HepG2 (cell line): ENCODE measurements at regions of chr2 and their contacts with region 1.

Region 1: DNA sequence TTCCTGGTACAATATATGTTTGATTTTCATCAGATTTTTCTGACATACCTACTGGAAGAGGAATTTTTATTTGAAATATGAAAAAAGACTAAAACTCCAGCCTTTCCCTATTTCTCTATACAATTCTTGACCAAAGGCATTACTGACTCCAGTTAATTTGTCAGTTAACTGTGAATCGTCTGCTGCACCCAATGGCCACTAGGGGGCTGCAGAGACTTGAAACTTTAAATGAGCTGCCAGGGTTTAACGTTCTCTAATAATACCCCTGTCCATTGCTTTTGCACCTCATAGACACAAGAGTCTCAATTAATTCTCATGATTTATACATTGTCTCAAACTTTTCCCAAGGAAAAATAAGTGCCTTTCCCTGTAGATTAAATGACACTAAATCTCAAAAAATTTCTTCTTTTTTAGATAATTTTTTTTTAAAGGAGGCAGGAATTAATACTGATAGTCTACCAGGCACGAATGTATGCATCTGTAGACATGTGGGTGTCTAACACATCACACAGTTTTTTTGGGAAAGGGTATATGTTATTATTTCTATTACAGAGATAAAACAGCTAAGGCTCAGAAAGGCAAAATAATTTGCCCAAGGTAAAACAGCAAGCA is 1.8 kb upstream of the ALK start:
- DNase-seq: peak; percentile 68
- ATAC-seq: peak; percentile 73
- H3K4me3 ChIP-seq: no peak overlapping the region
- H3K27ac ChIP-seq: no peak overlapping the region
- H3K4me1 ChIP-seq: no peaks in the 10 kb centered on the region
- H3K27me3 ChIP-seq: peaks cover 0 to 12% of the 10 kb centered on the region in 2 experiments; a peak in 3 of 5 replicates
- CTCF ChIP-seq: peak; percentile 82
- EP300 ChIP-seq: no peak
- POLR2A ChIP-seq: no peak
- RAD21 ChIP-seq: 0 out of 2 replicates have a peak, but pooled peaks have one; percentile 28

Region 2: GRCh38 chr2:29309090-29310029 is 613.9 kb before region 1 on chr2:
- CTCF ChIA-PET with region 1: no interaction called
- POLR2A ChIA-PET with region 1: no interaction called
- in situ Hi-C with region 1: no loop called
- intact Hi-C with region 1: loop called (anchors 1 kb)
- DNase-seq: peak; percentile 62
- ATAC-seq: peak; percentile 94
- H3K4me3 ChIP-seq: no peak overlapping the region
- H3K27ac ChIP-seq: no peak overlapping the region
- H3K4me1 ChIP-seq: no peaks in the 10 kb centered on the region
- H3K27me3 ChIP-seq: peaks cover 0 to 24% of the 10 kb centered on the region in 2 experiments; a peak in 2 of 5 replicates
- CTCF ChIP-seq: peak; percentile 71
- EP300 ChIP-seq: no peak
- POLR2A ChIP-seq: no peak
- RAD21 ChIP-seq: no peak

Region 3: GRCh38 chr2:29936020-29936419 is 12.8 kb after region 1 on chr2:
- CTCF ChIA-PET with region 1: no interaction called
- POLR2A ChIA-PET with region 1: no interaction called
- in situ Hi-C with region 1: no loop called
- intact Hi-C with region 1: no loop called
- DNase-seq: no peak
- ATAC-seq: no peak
- H3K4me3 ChIP-seq: no peak overlapping the region
- H3K27ac ChIP-seq: no peak overlapping the region
- H3K4me1 ChIP-seq: no peaks in the 10 kb centered on the region
- H3K27me3 ChIP-seq: peaks cover 0 to 6% of the 10 kb centered on the region in 2 experiments; a peak in 1 of 5 replicates
- CTCF ChIP-seq: no peak
- EP300 ChIP-seq: no peak
- POLR2A ChIP-seq: no peak
- RAD21 ChIP-seq: no peak

Region 4: DNA sequence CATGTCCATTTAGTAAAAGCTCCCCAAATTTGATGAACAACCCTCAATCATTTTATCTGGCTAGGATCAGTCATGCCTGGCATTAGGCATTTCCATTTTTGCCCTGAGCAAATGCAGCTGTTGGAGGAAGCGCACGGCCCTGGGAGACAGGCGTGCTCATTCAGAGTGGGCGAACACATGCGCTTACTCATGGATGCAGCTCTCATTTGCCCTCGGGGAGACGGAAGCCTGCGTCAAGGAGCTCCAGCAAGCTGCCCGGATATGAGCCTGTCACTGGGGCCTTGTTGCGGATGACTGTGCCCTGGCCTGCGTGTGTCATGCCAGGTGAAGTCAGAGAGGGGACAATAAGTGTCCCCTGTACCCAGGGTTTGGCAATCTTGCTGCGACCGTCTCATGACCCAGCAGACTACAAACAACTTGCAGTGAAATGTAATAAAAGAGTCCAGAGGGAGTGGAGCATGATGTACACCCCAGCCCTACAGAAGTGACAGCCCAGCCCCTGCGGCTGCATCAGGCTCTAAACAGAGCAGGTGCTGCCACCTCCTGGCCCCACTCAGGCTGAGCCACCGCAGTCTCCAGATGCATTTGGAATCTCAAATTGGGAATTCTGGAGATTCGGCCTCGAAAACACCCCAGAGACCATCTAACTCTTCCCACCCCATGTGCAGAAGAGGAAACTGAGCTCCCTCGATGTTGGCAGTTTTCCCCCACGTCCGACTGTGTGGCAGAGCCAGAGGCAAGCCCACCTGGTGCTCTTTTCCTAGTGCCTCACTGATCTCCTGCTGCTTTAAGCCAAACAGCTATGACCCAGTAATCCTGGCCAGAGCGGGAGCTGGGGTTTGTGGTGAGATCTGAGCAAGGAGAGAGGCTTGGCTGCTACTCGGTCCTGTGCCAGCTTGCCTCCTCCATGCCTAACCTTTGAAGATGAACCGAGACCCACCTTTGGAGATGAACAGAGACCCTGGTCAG is 103.2 kb after region 1 on chr2:
- CTCF ChIA-PET with region 1: interaction called, 16 read pairs
- POLR2A ChIA-PET with region 1: no interaction called
- in situ Hi-C with region 1: loop called (anchors 5 kb)
- intact Hi-C with region 1: no loop called
- DNase-seq: peak; percentile 13
- ATAC-seq: peak; percentile 98
- H3K4me3 ChIP-seq: no peak overlapping the region
- H3K27ac ChIP-seq: no peak overlapping the region
- H3K4me1 ChIP-seq: no peaks in the 10 kb centered on the region
- H3K27me3 ChIP-seq: peaks cover 2 to 26% of the 10 kb centered on the region in 2 experiments; a peak in 3 of 5 replicates
- CTCF ChIP-seq: peak; percentile 83
- EP300 ChIP-seq: no peak
- POLR2A ChIP-seq: no peak
- RAD21 ChIP-seq: peak; percentile 70

Region 5: DNA sequence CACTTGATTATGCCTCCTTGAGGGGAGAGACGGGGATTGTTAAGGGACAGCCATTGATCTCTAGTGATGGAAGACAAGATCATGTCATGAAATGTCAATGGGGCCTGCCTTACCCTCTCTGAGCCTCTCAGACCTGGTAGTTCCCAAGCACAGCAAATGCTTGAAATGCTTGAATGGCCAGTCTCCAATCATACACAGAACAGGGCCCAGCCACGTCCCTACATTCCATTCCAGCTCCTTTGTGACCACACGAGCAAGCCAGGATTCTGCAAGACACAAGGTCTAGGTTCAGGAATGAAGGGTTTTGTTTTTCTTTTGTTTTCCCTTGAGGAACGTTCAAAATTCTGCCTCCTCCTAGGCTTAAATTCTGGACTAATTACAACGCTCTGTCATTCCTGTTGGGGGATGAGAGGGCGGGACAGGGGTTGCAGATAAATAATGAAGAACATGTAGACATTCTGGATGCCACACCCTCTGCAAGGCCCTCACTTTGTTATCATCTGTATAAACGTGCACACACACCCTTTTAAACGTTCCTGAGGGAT is 125.5 kb after region 1 on chr2:
- CTCF ChIA-PET with region 1: no interaction called
- POLR2A ChIA-PET with region 1: no interaction called
- in situ Hi-C with region 1: no loop called
- intact Hi-C with region 1: no loop called
- DNase-seq: no peak
- ATAC-seq: no peak
- H3K4me3 ChIP-seq: no peak overlapping the region
- H3K27ac ChIP-seq: no peak overlapping the region
- H3K4me1 ChIP-seq: no peaks in the 10 kb centered on the region
- H3K27me3 ChIP-seq: peaks cover 0 to 5% of the 10 kb centered on the region in 2 experiments; a peak in 1 of 5 replicates
- CTCF ChIP-seq: no peak
- EP300 ChIP-seq: no peak
- POLR2A ChIP-seq: no peak
- RAD21 ChIP-seq: no peak

Region 6: GRCh38 chr2:30072250-30072842 is 149.1 kb after region 1 on chr2:
- CTCF ChIA-PET with region 1: interaction called, 24 read pairs
- POLR2A ChIA-PET with region 1: no interaction called
- in situ Hi-C with region 1: loop called (anchors 5 kb)
- intact Hi-C with region 1: no loop called
- DNase-seq: peak; percentile 70
- ATAC-seq: peak; percentile 99
- H3K4me3 ChIP-seq: no peak overlapping the region
- H3K27ac ChIP-seq: no peak overlapping the region
- H3K4me1 ChIP-seq: no peaks in the 10 kb centered on the region
- H3K27me3 ChIP-seq: peaks cover 0 to 18% of the 10 kb centered on the region in 2 experiments; a peak in 2 of 5 replicates
- CTCF ChIP-seq: peak; percentile 91
- EP300 ChIP-seq: no peak
- POLR2A ChIP-seq: no peak
- RAD21 ChIP-seq: no peak; the same call in 1 of the 2 replicates

Region 7: DNA sequence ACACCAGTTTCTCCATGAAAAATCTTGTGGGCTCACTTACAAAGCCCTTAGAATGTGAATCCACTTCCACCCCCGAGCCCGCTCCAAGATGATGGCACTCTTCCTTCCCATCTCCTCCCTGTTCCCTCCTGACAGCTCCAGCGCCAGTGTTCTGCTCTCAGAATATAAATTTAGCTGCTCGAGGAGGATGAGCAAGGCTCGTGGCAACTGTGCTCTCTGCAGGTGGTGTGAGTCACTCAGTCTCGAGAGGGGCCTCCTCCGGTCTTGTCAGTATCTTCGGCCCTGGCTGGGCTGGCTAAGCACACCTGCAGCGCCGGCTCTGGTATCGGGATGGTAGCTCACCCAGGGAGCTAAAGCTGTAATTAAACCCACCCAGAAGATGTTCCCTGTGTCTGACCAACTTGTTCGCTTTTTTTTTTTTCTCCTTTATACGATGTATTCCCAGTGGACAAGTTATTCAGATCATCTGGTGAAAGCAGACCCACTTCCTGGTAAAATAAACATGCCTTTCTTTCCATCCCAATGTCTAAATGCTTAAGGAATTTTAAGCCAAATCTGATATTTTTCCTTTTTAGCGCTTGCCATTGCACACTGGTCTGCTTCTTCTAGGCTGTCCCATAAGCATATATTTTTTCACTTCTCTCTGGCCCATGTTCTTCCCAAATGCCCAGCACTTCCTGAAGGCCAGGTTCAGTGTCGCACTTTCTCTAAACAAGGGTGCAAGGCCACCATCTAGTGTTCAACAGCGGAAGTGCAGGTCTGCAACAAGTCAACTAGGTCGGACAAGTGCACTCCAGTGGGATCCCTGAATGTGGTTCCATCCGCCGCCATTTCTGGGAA is 192.1 kb after region 1 on chr2:
- CTCF ChIA-PET with region 1: interaction called, 6 read pairs
- POLR2A ChIA-PET with region 1: no interaction called
- in situ Hi-C with region 1: no loop called
- intact Hi-C with region 1: loop called (anchors 1 kb)
- DNase-seq: peak; percentile 77
- ATAC-seq: peak; percentile 88
- H3K4me3 ChIP-seq: no peak overlapping the region
- H3K27ac ChIP-seq: no peak overlapping the region
- H3K4me1 ChIP-seq: peaks cover 13% of the 10 kb centered on the region
- H3K27me3 ChIP-seq: peaks cover 0 to 14% of the 10 kb centered on the region in 2 experiments; a peak in 3 of 5 replicates
- CTCF ChIP-seq: peak; percentile 97
- EP300 ChIP-seq: no peak
- POLR2A ChIP-seq: no peak
- RAD21 ChIP-seq: peak; percentile 92